Natural killer cell (primary cell): ENCODE measurements at regions of chr15 and their contacts with region 1.

Region 1: GRCh38 chr15:81265944-81266775 is 57.8 kb downstream of the STARD5 start:
- DNase-seq: peak; percentile 73 to 91
- ATAC-seq: peak; percentile 90 to 92 (median 91)
- H3K4me3 ChIP-seq: no peak overlapping the region
- H3K4me3 Mint-ChIP-seq: peak overlapping the region; percentile 49
- H3K27ac ChIP-seq: no peak overlapping the region
- H3K27ac Mint-ChIP-seq: no peak overlapping the region
- H3K4me1 ChIP-seq: peaks cover 15% of the 10 kb centered on the region
- H3K4me1 Mint-ChIP-seq: peaks cover 18 to 19% of the 10 kb centered on the region in 2 donors
- H3K27me3 ChIP-seq: no peaks in the 10 kb centered on the region
- H3K27me3 Mint-ChIP-seq: peaks cover 14 to 19% of the 10 kb centered on the region in 2 donors
- CTCF ChIP-seq: peak; percentile 75

Region 2: DNA sequence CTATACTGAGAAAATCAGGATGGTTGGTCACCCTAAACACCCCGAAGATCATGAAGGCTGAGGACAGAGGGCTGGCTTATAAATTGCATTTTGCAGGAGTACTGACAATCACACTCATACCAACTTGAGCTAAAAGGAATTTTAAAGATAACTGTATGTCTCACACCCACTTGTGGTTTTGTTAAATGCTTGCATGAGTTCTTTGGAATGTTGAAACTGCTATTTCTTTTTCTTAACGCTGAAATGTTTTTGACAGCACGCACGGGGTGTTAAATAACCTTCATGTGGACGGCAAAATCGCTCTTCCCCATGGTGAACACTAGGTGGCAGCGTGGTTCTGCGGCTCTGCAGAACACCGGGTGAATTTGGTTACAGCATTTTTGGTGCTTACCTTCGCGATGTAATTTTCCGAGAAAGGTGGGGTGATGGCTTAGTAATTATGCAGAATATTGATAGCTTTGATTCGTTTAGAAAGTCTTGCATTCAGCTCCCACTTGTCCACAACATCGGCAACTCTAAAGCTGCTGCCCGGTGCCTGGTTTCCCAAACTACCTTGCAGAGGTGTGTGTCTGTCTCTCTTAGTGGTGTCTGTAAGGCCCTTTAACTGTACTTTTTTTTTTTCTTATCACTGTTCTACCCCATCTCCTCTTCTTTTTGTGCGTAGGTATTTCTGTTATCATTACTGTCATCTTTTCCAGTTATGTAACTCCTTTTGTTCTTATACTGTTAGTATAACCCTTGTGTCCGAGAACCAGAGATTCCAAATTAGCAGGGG is 810.3 kb before region 1 on chr15:
- intact Hi-C with region 1: loop called (anchors 1 kb)
- DNase-seq: peak; percentile 30 to 83
- ATAC-seq: peak; percentile 60 to 87 (median 74)
- H3K4me3 ChIP-seq: no peak overlapping the region
- H3K4me3 Mint-ChIP-seq: no peak overlapping the region
- H3K27ac ChIP-seq: no peak overlapping the region
- H3K27ac Mint-ChIP-seq: no peak overlapping the region
- H3K4me1 ChIP-seq: no peaks in the 10 kb centered on the region
- H3K4me1 Mint-ChIP-seq: peaks cover 0 to 6% of the 10 kb centered on the region in 2 donors
- H3K27me3 ChIP-seq: no peaks in the 10 kb centered on the region
- H3K27me3 Mint-ChIP-seq: peaks cover 14 to 25% of the 10 kb centered on the region in 2 donors
- CTCF ChIP-seq: peak; percentile 87

Region 3: GRCh38 chr15:80970018-80970658 is 296.0 kb before region 1 on chr15:
- intact Hi-C with region 1: loop called (anchors 10 kb)
- DNase-seq: peak; percentile 46 to 83
- ATAC-seq: peak; percentile 61 to 81 (median 76)
- H3K4me3 ChIP-seq: no peak overlapping the region
- H3K4me3 Mint-ChIP-seq: no peak overlapping the region
- H3K27ac ChIP-seq: no peak overlapping the region
- H3K27ac Mint-ChIP-seq: no peak overlapping the region
- H3K4me1 ChIP-seq: peaks cover 3% of the 10 kb centered on the region
- H3K4me1 Mint-ChIP-seq: peaks cover 25% of the 10 kb centered on the region in 2 donors
- H3K27me3 ChIP-seq: no peaks in the 10 kb centered on the region
- H3K27me3 Mint-ChIP-seq: no peaks in the 10 kb centered on the region
- CTCF ChIP-seq: peak; percentile 94

Region 4: DNA sequence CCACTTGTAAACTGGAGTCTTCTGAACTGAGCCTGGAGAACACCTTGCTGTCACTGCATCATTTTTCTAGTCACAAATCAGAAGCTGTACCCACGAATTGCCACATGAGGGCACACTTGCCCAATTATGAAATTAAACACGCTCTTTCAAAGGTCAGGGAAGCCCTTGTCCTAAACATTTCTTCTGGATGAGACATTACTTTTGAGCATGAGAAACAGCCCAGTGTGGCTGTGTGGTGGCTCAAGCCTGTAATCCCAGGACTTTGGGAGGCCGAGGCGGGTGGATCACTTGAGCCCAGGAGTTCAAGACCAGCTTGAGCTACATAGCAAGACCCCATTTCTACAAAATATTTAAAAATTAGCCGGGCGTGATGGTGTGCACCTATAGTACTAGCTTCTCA is 159.6 kb before region 1 on chr15:
- intact Hi-C with region 1: loop called (anchors 1 kb)
- DNase-seq: peak; percentile 18 to 65
- ATAC-seq: peak in 2 of 3 donors; percentile 55 to 61
- H3K4me3 ChIP-seq: no peak overlapping the region
- H3K4me3 Mint-ChIP-seq: no peak overlapping the region
- H3K27ac ChIP-seq: no peak overlapping the region
- H3K27ac Mint-ChIP-seq: no peak overlapping the region
- H3K4me1 ChIP-seq: no peaks in the 10 kb centered on the region
- H3K4me1 Mint-ChIP-seq: no peaks in the 10 kb centered on the region
- H3K27me3 ChIP-seq: no peaks in the 10 kb centered on the region
- H3K27me3 Mint-ChIP-seq: peaks cover 30 to 45% of the 10 kb centered on the region in 2 donors
- CTCF ChIP-seq: peak; percentile 56

Region 5: DNA sequence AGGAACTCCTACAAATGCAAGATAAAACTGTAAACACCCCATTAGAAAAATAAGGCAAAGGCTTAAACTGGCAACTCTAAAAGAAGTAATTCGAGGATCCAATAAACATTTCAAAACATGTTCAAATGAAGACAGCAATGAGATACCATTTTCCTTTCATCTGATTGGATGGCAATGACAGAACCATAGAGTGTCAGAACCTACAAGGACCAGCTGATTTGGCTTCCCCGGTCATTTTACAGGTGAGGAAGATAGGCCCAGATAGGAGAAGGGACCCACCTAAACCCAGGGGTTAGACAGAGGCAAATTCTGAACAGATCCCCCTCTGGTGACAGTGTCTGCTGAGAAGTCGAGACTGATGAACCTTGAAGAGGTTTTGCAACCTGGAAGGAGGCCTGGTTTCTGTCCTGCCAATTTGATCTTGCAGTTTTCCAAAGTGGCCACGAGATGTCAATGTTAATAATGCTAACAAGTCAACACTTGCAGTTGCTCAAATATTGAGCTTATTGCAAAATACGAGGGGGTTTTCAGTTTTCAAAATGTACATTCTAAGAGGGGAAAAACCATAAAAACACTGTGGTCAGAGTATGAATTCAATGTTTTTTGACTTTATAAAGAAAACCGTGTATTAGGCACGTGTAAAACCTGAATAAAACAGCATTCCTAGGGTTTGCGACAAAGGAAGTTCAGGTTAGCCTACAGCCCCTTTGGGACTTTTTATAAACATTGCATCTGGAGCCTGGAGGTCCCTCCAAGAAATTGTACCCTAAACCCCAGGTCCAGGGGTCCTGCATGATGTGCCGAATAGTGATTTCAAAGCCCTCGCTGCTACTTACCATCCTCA is 110.6 kb before region 1 on chr15:
- intact Hi-C with region 1: loop called (anchors 1 kb)
- DNase-seq: peak in 1 of 2 donors; percentile 52
- ATAC-seq: no peak
- H3K4me3 ChIP-seq: no peak overlapping the region
- H3K4me3 Mint-ChIP-seq: no peak overlapping the region
- H3K27ac ChIP-seq: no peak overlapping the region
- H3K27ac Mint-ChIP-seq: no peak overlapping the region
- H3K4me1 ChIP-seq: peaks cover 3% of the 10 kb centered on the region
- H3K4me1 Mint-ChIP-seq: peaks cover under 1 to 4% of the 10 kb centered on the region in 2 donors
- H3K27me3 ChIP-seq: no peaks in the 10 kb centered on the region
- H3K27me3 Mint-ChIP-seq: peaks cover 7 to 31% of the 10 kb centered on the region in 2 donors
- CTCF ChIP-seq: peak; percentile 33

Region 6: DNA sequence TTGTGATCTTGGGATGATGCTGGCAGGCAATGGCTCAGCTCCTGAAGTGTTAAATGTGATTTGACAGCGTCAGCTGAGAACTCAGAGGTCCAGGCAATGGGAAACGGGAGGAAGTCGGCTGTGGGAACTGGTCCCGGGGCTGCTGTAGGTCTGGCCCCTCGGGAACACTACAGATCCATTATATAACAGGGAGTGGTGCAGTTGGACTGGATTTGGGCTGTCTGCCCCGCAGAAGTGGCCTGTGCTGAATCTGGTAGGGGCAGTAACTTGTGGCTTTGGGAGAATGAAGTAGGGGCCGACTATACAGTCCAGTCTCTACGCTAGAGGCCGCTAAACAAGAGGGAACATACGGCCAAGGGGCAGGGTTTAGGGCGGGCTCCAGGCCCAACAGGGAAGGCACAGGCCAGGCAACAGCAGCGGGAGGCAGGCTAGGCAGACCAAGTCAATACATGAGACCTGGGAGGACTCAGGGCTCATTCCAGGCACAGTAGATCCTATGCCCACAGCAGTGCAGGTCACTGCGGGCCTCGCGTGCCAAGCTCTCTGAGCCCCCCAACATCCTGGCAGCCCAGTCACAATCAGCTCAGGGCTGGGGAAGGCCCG is 89.8 kb before region 1 on chr15:
- intact Hi-C with region 1: loop called (anchors 5 kb)
- DNase-seq: no peak
- ATAC-seq: no peak
- H3K4me3 ChIP-seq: no peak overlapping the region
- H3K4me3 Mint-ChIP-seq: no peak overlapping the region
- H3K27ac ChIP-seq: no peak overlapping the region
- H3K27ac Mint-ChIP-seq: no peak overlapping the region
- H3K4me1 ChIP-seq: no peaks in the 10 kb centered on the region
- H3K4me1 Mint-ChIP-seq: no peaks in the 10 kb centered on the region
- H3K27me3 ChIP-seq: no peaks in the 10 kb centered on the region
- H3K27me3 Mint-ChIP-seq: peaks cover 12 to 16% of the 10 kb centered on the region in 2 donors
- CTCF ChIP-seq: no peak

Region 7: DNA sequence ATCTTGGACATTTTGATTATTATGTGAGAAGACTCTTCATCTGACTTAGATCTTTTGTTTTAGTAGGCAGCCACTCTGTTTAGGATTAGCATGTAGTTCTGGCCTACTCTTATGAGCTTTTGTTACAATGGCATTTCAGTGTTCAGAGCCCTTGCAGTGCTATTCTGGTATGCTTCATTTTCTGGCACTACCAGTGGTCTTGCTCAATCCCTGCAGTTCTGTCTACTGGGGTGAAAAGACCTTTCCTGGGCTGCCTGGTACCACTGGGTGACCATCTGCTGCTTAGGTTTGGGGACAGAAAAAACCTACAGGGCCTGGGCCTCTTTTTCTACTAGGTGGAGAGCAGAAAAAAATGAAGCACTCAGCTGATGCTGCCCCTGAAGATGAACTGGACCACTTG is 27.0 kb before region 1 on chr15:
- intact Hi-C with region 1: no loop called
- DNase-seq: no peak
- ATAC-seq: no peak
- H3K4me3 ChIP-seq: no peak overlapping the region
- H3K4me3 Mint-ChIP-seq: no peak overlapping the region
- H3K27ac ChIP-seq: no peak overlapping the region
- H3K27ac Mint-ChIP-seq: no peak overlapping the region
- H3K4me1 ChIP-seq: no peaks in the 10 kb centered on the region
- H3K4me1 Mint-ChIP-seq: no peaks in the 10 kb centered on the region
- H3K27me3 ChIP-seq: no peaks in the 10 kb centered on the region
- H3K27me3 Mint-ChIP-seq: peaks cover under 1 to 2% of the 10 kb centered on the region in 2 donors
- CTCF ChIP-seq: no peak